ENCODE measurements at regions of chr10 and their contacts with region 1.

Region 1: GRCh38 chr10:67520924-67521520 is 175.0 kb downstream of the CTNNA3 start:
- DNase-seq: peak; percentile 56 to 74
- H3K4me3 ChIP-seq: no peak overlapping the region
- H3K4me3 Mint-ChIP-seq: no peak overlapping the region
- H3K27ac Mint-ChIP-seq: no peak overlapping the region
- H3K4me1 ChIP-seq: peaks cover 4% of the 10 kb centered on the region; the same call in 1 of the 2 replicates
- H3K4me1 Mint-ChIP-seq: peaks cover 6% of the 10 kb centered on the region
- H3K27me3 ChIP-seq: no peaks in the 10 kb centered on the region
- H3K27me3 Mint-ChIP-seq: no peaks in the 10 kb centered on the region
- CTCF ChIP-seq: peak; percentile 92 to 96

Region 2: DNA sequence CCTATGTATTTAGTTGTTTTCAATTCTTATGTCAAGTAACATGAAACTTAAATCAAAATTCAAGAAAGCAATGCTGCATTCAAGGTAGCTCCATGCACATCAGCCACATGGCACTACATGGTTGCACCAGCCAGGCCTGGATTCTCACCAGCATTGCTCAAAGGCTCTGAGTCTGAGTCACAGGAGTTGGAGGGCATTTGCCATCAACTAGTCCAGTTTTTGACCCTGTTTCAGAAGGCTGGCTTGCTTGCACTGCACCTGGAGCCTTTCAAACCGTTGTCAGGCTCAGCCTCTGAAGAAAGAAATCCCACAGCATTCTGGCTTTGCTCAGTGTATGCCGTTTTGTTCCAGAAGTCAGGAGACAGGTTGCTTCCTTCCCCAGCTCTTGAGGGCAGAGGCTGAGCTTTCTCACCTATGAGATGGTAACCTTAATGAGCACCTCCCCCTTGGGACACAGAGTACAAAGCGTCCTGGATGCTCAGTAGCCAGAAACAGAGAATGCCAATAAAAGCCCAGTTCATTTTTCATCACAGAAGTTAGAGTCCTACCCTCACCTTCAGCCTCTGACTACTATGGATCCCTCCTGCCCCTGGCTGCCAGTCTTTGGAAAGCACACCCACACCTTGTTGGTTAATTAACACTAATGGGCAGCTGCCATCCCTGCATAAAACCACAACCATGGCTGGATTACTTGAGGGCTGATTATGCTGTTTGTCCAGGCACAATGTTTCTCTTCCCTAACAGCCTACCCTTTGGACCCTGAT is 883.6 kb before region 1 on chr10:
- CTCF ChIA-PET with region 1: no interaction called
- POLR2A ChIA-PET with region 1: no interaction called
- intact Hi-C with region 1: loop called (anchors 10 kb)
- DNase-seq: no peak
- H3K4me3 ChIP-seq: no peak overlapping the region
- H3K4me3 Mint-ChIP-seq: no peak overlapping the region
- H3K27ac Mint-ChIP-seq: no peak overlapping the region
- H3K4me1 ChIP-seq: no peaks in the 10 kb centered on the region
- H3K4me1 Mint-ChIP-seq: no peaks in the 10 kb centered on the region
- H3K27me3 ChIP-seq: no peaks in the 10 kb centered on the region
- H3K27me3 Mint-ChIP-seq: peaks cover 3% of the 10 kb centered on the region
- CTCF ChIP-seq: no peak

Region 3: DNA sequence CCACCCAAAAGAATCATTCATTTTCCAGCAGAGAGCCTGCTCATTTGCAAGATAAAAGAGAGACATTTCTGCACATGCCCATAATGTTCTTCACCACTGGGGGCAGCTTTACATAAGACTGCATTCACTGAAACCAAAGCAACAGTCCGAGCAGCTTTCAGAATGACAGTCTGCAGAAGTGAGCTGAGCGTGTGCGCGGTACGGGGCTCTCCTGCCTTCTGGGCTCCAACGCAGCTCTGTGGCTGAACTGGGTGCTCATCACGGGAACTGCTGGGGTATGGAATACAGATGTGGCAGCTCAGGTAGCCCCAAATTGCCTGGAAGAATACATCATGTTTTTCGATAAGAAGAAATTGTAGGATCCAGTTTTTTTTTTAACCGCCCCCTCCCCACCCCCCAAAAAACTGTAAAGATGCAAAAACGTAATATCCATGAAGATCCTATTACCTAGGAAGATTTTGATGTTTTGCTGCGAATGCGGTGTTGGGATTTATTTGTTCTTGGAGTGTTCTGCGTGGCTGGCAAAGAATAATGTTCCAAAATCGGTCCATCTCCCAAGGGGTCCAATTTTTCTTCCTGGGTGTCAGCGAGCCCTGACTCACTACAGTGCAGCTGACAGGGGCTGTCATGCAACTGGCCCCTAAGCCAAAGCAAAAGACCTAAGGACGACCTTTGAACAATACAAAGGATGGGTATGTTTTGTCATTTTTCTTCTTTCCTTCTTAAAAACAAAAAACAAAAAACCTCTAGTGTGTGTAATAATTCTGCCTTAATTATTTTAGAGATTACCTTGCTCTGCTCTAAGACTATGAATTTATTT is 594.9 kb before region 1 on chr10 and contains the start of gene LRRTM3:
- CTCF ChIA-PET with region 1: interaction called, 17 read pairs
- POLR2A ChIA-PET with region 1: no interaction called
- intact Hi-C with region 1: loop called (anchors 2 kb)
- DNase-seq: peak; percentile 73 to 77
- H3K4me3 ChIP-seq: no peak within 1 kb of the TSS
- H3K4me3 Mint-ChIP-seq: no peak within 1 kb of the TSS
- H3K27ac Mint-ChIP-seq: no peak within 1 kb of the TSS
- H3K4me1 ChIP-seq: no peaks in the 10 kb centered on the region
- H3K4me1 Mint-ChIP-seq: no peaks in the 10 kb centered on the region
- H3K27me3 ChIP-seq: no peaks in the 10 kb centered on the region; the same call in 1 of the 2 replicates
- H3K27me3 Mint-ChIP-seq: peaks cover 19% of the 10 kb centered on the region
- CTCF ChIP-seq: peak; percentile 77 to 95
- total RNA-seq, gene LRRTM3: not detected in 2 replicates

Region 4: DNA sequence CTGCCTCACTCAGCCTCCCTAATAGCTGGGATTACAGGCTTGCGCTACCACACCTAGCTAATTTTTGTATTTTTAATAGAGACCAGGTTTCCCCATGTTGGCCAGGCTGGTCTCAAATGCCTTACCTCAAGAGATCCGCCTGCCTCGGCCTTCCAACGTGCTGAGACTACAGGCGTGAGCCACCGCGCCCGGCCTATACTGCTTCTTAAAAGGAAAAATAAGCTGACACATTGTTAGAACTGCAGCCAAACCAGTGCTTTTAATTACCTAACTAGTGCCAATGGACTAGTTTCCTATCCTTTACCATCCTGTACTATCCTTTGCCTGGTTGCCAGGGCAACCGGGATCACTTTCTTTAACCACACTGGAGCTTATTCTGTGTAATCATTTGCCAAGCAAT is 487.1 kb before region 1 on chr10:
- CTCF ChIA-PET with region 1: no interaction called
- POLR2A ChIA-PET with region 1: no interaction called
- intact Hi-C with region 1: loop called (anchors 5 kb)
- DNase-seq: no peak
- H3K4me3 ChIP-seq: no peak overlapping the region
- H3K4me3 Mint-ChIP-seq: no peak overlapping the region
- H3K27ac Mint-ChIP-seq: no peak overlapping the region
- H3K4me1 ChIP-seq: no peaks in the 10 kb centered on the region
- H3K4me1 Mint-ChIP-seq: no peaks in the 10 kb centered on the region
- H3K27me3 ChIP-seq: no peaks in the 10 kb centered on the region
- H3K27me3 Mint-ChIP-seq: no peaks in the 10 kb centered on the region
- CTCF ChIP-seq: no peak

Region 5: DNA sequence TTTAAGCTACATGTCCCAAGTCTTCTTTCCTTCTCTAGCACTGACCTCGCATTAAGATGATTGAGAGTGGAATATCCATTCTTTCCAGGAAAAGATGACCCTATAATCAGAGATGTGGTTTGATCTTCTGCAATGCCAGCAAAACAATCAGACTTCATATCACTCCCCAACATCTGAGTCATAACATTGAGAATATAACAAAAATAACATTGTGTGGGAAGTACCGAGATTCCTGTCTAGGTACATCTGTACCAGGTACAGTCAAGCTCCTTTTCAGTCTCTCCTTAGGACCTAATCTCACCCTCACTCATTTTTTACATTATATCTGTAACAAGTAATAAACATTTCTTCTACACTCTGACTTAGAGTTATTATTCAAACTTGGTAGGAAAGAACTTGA is 393.6 kb before region 1 on chr10:
- CTCF ChIA-PET with region 1: no interaction called
- POLR2A ChIA-PET with region 1: no interaction called
- intact Hi-C with region 1: loop called (anchors 5 kb)
- DNase-seq: no peak
- H3K4me3 ChIP-seq: no peak overlapping the region
- H3K4me3 Mint-ChIP-seq: no peak overlapping the region
- H3K27ac Mint-ChIP-seq: no peak overlapping the region
- H3K4me1 ChIP-seq: no peaks in the 10 kb centered on the region
- H3K4me1 Mint-ChIP-seq: no peaks in the 10 kb centered on the region
- H3K27me3 ChIP-seq: no peaks in the 10 kb centered on the region
- H3K27me3 Mint-ChIP-seq: no peaks in the 10 kb centered on the region
- CTCF ChIP-seq: no peak

Region 6: GRCh38 chr10:67306588-67307205 is 214.3 kb before region 1 on chr10:
- CTCF ChIA-PET with region 1: interaction called, 7 read pairs
- POLR2A ChIA-PET with region 1: no interaction called
- intact Hi-C with region 1: loop called (anchors 2 kb)
- DNase-seq: peak in 1 of 2 experiments; percentile 69
- H3K4me3 ChIP-seq: no peak overlapping the region
- H3K4me3 Mint-ChIP-seq: no peak overlapping the region
- H3K27ac Mint-ChIP-seq: no peak overlapping the region
- H3K4me1 ChIP-seq: no peaks in the 10 kb centered on the region
- H3K4me1 Mint-ChIP-seq: no peaks in the 10 kb centered on the region
- H3K27me3 ChIP-seq: no peaks in the 10 kb centered on the region
- H3K27me3 Mint-ChIP-seq: no peaks in the 10 kb centered on the region
- CTCF ChIP-seq: peak; percentile 72 to 89

Region 7: DNA sequence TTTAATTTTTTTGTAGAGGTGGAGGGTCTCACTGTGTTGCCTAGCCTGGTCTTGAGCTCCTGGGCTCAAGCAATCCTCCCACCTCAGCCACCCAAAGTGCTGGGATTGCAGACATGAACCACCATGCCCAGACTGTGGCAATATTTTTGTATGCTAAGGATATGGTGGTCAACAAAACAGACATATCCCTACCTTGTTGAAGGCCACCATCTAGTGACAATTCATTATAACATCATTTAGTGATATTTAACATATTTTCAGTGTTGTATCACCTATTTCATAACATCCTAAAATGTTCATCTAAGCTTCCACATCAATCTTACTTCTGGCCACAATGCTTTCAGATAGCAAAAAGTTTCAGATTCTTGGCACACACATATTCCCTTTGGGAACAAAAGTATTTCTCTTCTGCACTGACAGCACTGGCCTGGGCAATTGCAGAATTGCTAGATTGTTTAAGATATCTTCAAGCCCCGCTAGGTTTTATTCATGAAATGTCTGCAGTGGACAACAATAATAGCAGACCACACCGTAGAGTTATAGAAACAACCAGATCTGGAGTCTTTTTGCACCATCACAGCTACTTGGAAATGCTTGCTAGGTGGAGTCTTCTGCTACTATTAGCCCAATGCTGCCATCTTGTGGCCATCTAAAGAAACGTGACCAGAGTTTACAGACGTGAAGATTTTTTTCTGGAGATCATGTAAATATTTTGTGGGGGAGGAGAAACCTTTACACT is 258.6 kb after region 1 on chr10:
- CTCF ChIA-PET with region 1: interaction called, 3 read pairs
- POLR2A ChIA-PET with region 1: no interaction called
- intact Hi-C with region 1: loop called (anchors 2 kb)
- DNase-seq: peak; percentile 80 to 88
- H3K4me3 ChIP-seq: no peak overlapping the region
- H3K4me3 Mint-ChIP-seq: no peak overlapping the region
- H3K27ac Mint-ChIP-seq: no peak overlapping the region
- H3K4me1 ChIP-seq: no peaks in the 10 kb centered on the region
- H3K4me1 Mint-ChIP-seq: no peaks in the 10 kb centered on the region
- H3K27me3 ChIP-seq: no peaks in the 10 kb centered on the region
- H3K27me3 Mint-ChIP-seq: peaks cover 4% of the 10 kb centered on the region
- CTCF ChIP-seq: peak; percentile 92 to 95